ENCODE measurements at regions of chr1 and their contacts with region 1.

Region 1: GRCh38 chr1:230797942-230798418 is 50.8 kb downstream of the CAPN9 start:
- DNase-seq: peak; percentile 34
- H3K4me3 ChIP-seq: no peak overlapping the region
- CTCF ChIP-seq: peak; percentile 84

Region 2: DNA sequence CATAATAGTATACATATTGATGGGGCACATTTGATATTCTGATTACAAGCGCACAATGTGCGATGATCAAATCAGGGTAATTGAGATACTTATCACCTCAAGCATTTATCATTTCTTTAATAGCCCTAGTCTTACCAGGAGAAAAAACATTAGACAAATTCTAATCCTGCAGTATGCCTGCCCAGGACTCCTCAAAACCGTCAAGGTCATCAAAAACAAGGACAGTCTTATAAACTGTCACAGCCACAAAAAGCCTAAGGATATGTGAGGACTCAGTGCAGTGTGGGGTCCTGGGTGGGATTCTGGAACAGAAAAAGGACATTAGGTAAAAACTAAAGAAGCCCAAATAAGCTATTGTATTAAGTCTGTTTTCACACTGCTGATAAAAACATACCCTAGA is 31.7 kb before region 1 on chr1:
- CTCF ChIA-PET with region 1: no interaction called
- POLR2A ChIA-PET with region 1: no interaction called
- DNase-seq: no peak
- H3K4me3 ChIP-seq: no peak overlapping the region
- CTCF ChIP-seq: no peak

Region 3: DNA sequence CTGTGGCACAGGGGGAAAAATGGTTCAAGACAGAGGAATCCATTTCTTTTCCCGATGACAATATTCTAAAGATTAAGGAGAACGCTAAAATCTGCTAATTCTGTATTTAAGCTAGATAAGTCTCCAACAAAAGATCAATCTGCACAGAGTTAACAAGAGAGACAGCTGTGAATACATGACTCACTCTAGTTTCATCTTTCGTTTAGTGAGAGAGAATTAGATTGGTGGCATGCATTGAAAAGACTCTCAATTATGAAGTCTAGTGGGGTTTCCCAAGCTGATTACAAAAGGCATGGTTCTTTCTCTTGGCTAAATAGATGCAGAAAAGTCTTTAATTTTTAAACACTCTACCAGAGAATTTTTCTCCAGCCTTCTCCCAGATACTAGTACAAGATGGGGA is 16.4 kb before region 1 on chr1:
- CTCF ChIA-PET with region 1: interaction called, 54 read pairs
- POLR2A ChIA-PET with region 1: no interaction called
- DNase-seq: no peak
- H3K4me3 ChIP-seq: no peak overlapping the region
- CTCF ChIP-seq: no peak

Region 4: DNA sequence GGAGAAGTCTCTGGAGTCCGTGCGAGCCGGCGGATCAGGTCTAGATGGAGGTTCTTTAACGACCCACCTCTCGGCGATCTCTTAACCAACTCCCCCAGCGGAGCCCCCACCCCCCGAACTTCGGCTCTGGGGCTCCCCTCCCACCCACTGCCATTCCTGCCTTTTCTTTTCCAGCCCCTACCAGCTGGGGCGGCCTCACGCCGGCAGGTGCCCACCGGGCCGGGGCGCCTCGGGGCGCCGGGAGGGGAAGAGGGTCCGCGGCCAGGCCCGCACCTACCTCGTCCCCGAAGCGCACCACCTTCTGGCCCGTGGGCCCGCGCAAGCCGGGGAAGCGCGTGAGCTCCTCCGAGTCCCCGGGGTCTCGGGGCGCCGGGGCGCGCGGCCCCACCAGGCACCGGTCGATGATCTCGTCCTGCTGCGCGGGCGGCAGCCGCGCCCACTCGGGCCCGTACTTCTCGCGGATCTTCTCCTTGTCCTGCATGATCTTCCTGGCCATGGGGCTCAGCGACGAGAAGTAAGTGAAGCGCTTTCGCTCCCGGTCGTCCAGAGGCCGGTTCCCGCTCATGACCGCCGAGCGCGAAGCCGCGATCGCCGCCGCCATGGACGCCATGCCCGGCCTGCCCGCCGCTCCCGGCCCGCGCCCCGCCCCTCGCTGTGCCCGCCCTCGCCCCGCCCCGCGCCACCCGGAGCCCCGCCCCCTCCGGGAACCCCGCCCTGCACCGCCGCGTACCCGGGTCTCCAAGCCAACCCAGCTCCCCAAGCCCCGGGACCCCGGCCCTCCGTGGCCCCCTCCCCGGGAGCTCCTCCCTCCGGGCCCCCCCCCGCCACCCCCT is 70.1 kb after region 1 on chr1 and contains the start of gene C1orf198:
- CTCF ChIA-PET with region 1: interaction called, 16 read pairs
- POLR2A ChIA-PET with region 1: no interaction called
- DNase-seq: no peak
- H3K4me3 ChIP-seq: peak within 1 kb of the TSS; percentile 84
- CTCF ChIP-seq: no peak

Region 5: GRCh38 chr1:230917284-230918135 is 119.5 kb after region 1 on chr1:
- CTCF ChIA-PET with region 1: interaction called, 261 read pairs
- POLR2A ChIA-PET with region 1: no interaction called
- DNase-seq: no peak
- H3K4me3 ChIP-seq: no peak overlapping the region
- CTCF ChIP-seq: peak; percentile 62

Region 6: DNA sequence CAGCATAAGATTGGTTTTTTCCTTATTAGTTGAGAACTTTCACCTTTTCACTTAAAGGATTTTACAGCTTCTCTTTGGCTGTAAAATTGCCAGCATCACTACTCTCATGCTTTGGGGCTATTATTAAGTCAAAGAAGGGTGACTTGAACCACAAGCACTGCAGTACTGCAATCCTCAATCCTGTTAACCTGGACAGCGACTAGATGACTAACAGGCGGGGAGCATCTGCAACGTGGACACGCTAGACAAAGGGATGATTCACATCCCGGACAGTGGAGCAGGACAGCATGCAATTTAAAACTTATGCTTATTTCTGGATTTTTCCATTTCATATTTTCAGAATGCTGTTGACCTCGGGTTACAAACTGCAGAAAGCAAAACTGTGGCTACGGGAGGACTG is 189.0 kb after region 1 on chr1:
- CTCF ChIA-PET with region 1: interaction called, 10 read pairs
- POLR2A ChIA-PET with region 1: no interaction called
- DNase-seq: peak; percentile 23
- H3K4me3 ChIP-seq: no peak overlapping the region
- CTCF ChIP-seq: no peak

Measured in AG04449 (cell line).